Activated B cell treated with CpG ODN at 0.5 μM for 24 hours (primary cell): ENCODE measurements at regions of chr1 and their contacts with region 1.

Region 1: DNA sequence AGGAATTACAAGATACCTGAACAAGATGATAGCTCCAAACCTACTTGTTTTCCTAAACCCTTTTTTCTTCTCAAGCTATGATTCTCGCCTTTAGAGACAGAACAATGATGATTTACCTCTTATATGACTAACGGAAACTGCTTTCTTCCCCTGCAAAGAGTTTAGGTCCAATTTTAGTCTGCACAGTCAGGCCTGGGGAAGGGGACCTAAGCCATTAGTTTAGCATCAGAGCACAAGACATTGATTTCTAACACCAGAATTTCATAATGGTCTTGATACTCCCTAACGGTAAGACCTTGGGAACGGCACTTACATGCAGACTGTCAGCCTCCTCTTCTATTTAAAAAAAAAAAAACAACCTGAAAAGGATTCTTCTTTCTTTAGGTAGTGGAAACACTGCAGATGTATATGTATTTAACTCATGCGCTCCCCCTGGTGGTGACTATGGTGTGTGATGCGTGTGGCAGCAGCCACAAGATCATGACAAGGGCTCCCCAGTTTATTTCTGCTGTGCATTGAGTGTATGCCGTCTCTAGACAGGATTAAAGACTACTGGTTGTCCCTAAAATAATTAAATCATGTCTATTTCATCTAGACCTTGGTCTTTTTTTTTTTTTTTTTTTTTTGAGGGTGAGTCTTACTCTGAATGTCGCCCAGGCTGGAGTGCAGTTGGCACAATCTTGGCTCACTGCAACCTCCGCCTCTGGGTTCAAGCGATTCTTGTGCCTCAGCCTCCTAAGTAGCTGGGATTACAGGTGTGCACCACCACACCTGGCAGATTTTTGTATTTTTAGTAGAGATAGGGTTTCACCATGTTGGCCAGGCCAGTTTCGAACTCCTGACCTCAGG is 37.3 kb upstream of the TMEM222 start:
- DNase-seq: peak; percentile 64
- ATAC-seq: peak; percentile 96
- H3K4me3 Mint-ChIP-seq: no peak overlapping the region
- H3K27ac Mint-ChIP-seq: peak overlapping the region; percentile 13
- H3K4me1 Mint-ChIP-seq: peaks cover 12% of the 10 kb centered on the region
- H3K27me3 Mint-ChIP-seq: no peaks in the 10 kb centered on the region
- CTCF ChIP-seq: no peak

Region 2: GRCh38 chr1:27102707-27103491 is 181.8 kb before region 1 on chr1:
- CTCF ChIA-PET with region 1: interaction called, 104 read pairs
- POLR2A ChIA-PET with region 1: interaction called, 10 read pairs
- intact Hi-C with region 1: loop called (anchors 1 kb)
- DNase-seq: peak; percentile 85
- ATAC-seq: peak; percentile 33
- H3K4me3 Mint-ChIP-seq: no peak overlapping the region
- H3K27ac Mint-ChIP-seq: no peak overlapping the region
- H3K4me1 Mint-ChIP-seq: peaks cover 41% of the 10 kb centered on the region
- H3K27me3 Mint-ChIP-seq: no peaks in the 10 kb centered on the region
- CTCF ChIP-seq: no peak

Region 3: DNA sequence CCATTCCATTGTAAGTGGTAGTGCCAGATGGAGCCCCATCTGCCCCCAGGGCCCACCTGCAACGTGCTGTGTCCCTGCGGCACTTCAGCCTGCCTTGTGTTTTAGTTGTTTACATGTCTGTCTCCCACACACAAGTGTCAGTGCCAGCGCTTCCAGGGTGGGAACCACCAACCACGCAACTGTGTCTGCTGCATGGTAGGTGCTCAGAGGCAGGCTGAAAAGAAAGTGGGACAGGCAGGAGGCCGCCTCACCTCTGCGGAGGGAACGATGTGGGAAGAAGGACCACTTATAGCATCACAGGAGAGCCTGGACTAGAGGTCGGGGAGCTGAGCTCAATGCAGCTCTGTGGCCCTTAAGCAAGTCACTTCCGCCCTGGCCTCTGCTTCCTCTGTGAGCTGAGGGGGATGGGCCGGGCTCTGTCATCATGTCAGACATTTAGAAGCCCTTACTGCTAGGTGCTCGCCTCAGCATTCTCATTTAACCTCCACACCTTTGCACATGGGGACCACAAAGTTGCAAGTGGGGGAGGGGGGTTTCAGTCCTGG is 147.6 kb before region 1 on chr1:
- CTCF ChIA-PET with region 1: interaction called, 10 read pairs
- POLR2A ChIA-PET with region 1: no interaction called
- intact Hi-C with region 1: no loop called
- DNase-seq: peak; percentile 41
- ATAC-seq: peak; percentile 83
- H3K4me3 Mint-ChIP-seq: peak overlapping the region; percentile 66
- H3K27ac Mint-ChIP-seq: peak overlapping the region; percentile 93
- H3K4me1 Mint-ChIP-seq: peaks cover 56% of the 10 kb centered on the region
- H3K27me3 Mint-ChIP-seq: no peaks in the 10 kb centered on the region
- CTCF ChIP-seq: no peak

Region 4: GRCh38 chr1:27201295-27201694 is 83.4 kb before region 1 on chr1:
- CTCF ChIA-PET with region 1: interaction called, 62 read pairs
- POLR2A ChIA-PET with region 1: no interaction called
- intact Hi-C with region 1: loop called (anchors 1 kb)
- DNase-seq: no peak
- ATAC-seq: no peak
- H3K4me3 Mint-ChIP-seq: no peak overlapping the region
- H3K27ac Mint-ChIP-seq: no peak overlapping the region
- H3K4me1 Mint-ChIP-seq: peaks cover 6% of the 10 kb centered on the region
- H3K27me3 Mint-ChIP-seq: no peaks in the 10 kb centered on the region
- CTCF ChIP-seq: no peak

Region 5: GRCh38 chr1:27241677-27242076 is 43.0 kb before region 1 on chr1:
- CTCF ChIA-PET with region 1: interaction called, 3 read pairs
- POLR2A ChIA-PET with region 1: interaction called, 10 read pairs
- intact Hi-C with region 1: no loop called
- DNase-seq: no peak
- ATAC-seq: no peak
- H3K4me3 Mint-ChIP-seq: no peak overlapping the region
- H3K27ac Mint-ChIP-seq: no peak overlapping the region
- H3K4me1 Mint-ChIP-seq: peaks cover 23% of the 10 kb centered on the region
- H3K27me3 Mint-ChIP-seq: no peaks in the 10 kb centered on the region
- CTCF ChIP-seq: no peak

Region 6: DNA sequence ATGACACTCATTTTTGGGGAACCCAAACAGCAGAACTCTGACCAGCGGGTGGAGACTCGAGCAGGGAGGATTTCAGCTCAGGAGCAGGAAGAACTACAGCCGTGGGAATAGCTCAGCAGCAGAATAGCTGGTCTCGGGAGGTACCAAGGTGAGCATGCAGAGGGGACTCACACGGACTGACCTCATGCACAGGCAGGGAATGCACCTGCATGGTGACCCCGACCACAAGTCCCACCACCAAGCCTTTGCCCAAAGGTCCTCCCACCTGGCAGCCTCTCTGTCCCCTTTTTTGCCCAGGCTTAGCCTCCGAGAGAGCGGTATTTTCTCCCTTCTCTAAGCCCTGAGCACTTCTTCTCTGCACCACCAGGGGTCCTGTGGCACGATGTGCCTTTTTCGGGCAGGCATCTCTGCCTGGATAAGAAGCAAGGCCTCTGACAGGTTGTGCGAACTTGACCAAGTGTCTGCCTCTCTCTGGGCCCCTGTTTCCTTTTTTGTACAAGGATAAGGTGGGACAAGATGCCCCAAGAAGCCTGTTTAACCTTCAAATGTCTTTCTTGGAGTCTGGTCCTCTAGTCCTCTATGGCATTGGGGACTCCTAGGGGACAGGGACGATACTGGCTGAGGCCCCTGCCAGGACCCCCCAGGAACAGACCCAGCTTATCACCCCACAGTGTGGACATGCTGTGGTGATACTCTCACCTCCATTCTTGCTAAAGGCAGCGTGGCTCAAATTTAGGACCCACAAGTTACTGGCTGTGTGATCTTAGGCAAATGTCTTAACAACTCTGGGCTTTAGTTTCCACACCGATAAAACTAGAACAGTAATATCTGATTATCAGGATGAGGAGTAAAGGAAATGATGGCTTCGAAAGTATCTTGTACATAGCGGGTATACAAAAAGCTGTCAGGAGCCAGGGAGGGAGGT is 359.3 kb after region 1 on chr1:
- CTCF ChIA-PET with region 1: no interaction called
- POLR2A ChIA-PET with region 1: no interaction called
- intact Hi-C with region 1: no loop called
- DNase-seq: peak; percentile 53
- ATAC-seq: peak; percentile 99
- H3K4me3 Mint-ChIP-seq: no peak overlapping the region
- H3K27ac Mint-ChIP-seq: peak overlapping the region; percentile 46
- H3K4me1 Mint-ChIP-seq: peaks cover 15% of the 10 kb centered on the region
- H3K27me3 Mint-ChIP-seq: no peaks in the 10 kb centered on the region
- CTCF ChIP-seq: no peak